ENCODE measurements at regions of chr6 and their contacts with region 1.

Region 1: DNA sequence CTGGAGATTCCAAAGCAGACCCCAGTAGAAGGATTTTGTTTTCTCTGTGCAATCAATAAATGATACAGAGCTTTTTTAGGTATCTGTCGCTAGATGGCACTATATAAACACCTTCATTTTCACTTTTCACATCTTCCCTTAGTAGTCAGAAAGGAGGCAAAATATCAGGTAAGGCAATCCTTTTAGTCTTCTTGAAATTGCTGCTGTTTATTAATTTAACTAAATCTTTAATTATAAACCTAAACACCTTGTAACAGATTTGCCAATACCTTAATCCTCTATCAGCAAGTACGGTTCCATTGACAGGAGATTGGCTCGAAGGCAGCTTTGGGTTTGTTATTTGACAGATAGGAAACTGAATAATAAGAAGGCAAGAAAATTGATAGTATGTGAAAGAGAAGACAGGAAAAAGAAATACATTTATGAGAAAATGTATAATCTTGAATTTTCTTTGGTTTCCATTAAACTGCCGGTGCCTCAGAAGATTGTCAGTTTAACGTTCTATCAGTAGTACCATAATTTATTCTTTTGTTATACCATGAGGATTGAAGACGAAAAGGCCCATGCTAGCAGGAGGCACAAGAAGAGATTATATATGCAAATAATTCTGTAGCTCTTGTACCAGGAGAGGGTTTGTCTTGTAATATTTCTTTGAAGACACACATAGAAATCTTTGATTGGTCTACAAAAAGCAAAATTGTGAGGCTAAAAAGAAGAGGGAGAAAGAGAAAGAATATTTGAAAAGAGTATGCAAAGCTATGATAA is 23.5 kb upstream of the IBTK start:
- DNase-seq: peak in 5 of 9 donors; percentile 14 to 38 (median 27)
- ATAC-seq: peak; percentile 72
- H3K4me3 ChIP-seq: no peak overlapping the region
- H3K4me3 Mint-ChIP-seq: no peak overlapping the region
- H3K27ac ChIP-seq: no peak overlapping the region
- H3K27ac Mint-ChIP-seq: no peak overlapping the region
- H3K4me1 ChIP-seq: no peaks in the 10 kb centered on the region
- H3K4me1 Mint-ChIP-seq: no peaks in the 10 kb centered on the region
- H3K27me3 ChIP-seq: no peaks in the 10 kb centered on the region
- H3K27me3 Mint-ChIP-seq: peaks cover 0 to 10% (median 0%) of the 10 kb centered on the region in 5 donors

Region 2: DNA sequence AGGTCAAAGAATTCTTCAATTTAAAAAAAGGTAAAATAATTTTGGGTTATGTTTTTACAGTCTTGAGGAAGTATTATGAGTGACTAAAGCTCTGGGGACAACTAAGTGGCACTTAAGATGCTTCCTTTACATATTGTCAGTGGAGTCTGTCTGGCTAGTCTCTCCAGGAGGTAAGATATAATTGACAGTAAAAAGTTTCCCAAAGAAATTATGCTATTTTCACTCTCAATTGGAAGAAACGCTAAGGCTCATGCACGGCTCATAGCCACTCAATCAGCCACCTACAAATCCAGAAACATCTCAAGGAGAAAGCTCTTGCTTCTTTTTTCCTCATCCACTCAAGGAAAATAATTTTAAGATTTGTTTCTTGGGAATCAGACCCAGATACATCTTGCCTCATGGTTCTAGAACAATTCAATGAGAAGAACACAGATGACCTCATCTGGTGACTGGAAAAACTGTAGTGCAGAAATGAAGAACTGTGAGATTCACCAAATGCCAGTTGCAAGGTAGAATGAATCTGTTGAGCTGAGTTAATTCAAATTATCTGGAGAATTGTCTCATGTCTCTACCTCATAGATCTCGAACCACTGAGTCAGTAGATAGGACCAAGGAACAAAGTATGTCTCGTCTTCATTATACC is 345.4 kb after region 1 on chr6:
- CTCF ChIA-PET with region 1: no interaction called
- POLR2A ChIA-PET with region 1: no interaction called
- intact Hi-C with region 1: loop called in 1 of 2 experiments (anchors 5 kb)
- DNase-seq: no peak
- ATAC-seq: no peak
- H3K4me3 ChIP-seq: no peak overlapping the region
- H3K4me3 Mint-ChIP-seq: no peak overlapping the region
- H3K27ac ChIP-seq: no peak overlapping the region
- H3K27ac Mint-ChIP-seq: no peak overlapping the region
- H3K4me1 ChIP-seq: no peaks in the 10 kb centered on the region
- H3K4me1 Mint-ChIP-seq: no peaks in the 10 kb centered on the region
- H3K27me3 ChIP-seq: no peaks in the 10 kb centered on the region
- H3K27me3 Mint-ChIP-seq: peaks cover 0 to 4% (median 0%) of the 10 kb centered on the region in 5 donors

Region 3: DNA sequence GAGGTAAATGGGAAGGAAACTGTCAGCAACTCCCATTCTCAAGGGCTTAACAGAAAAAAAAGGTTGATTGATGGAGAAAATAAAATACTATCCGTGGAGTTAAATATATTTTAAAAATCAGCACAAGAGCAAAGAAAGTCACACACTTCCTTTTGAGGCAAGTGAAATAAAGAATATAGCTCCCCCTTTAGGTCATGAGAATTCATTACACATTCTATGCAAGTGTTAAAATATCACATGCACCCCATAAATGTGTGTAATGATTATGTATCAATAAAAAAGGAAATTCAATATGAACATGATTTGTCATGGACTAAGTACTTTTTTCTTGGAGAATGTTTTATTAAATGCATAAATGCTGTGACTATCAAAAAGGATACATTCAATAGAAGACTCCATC is 441.8 kb after region 1 on chr6:
- CTCF ChIA-PET with region 1: no interaction called
- POLR2A ChIA-PET with region 1: no interaction called
- intact Hi-C with region 1: loop called in 1 of 2 experiments (anchors 1 kb)
- DNase-seq: no peak
- ATAC-seq: no peak
- H3K4me3 ChIP-seq: no peak overlapping the region
- H3K4me3 Mint-ChIP-seq: no peak overlapping the region
- H3K27ac ChIP-seq: no peak overlapping the region
- H3K27ac Mint-ChIP-seq: no peak overlapping the region
- H3K4me1 ChIP-seq: no peaks in the 10 kb centered on the region
- H3K4me1 Mint-ChIP-seq: no peaks in the 10 kb centered on the region
- H3K27me3 ChIP-seq: no peaks in the 10 kb centered on the region
- H3K27me3 Mint-ChIP-seq: peaks cover 0 to 38% (median 16%) of the 10 kb centered on the region in 5 donors

Region 4: DNA sequence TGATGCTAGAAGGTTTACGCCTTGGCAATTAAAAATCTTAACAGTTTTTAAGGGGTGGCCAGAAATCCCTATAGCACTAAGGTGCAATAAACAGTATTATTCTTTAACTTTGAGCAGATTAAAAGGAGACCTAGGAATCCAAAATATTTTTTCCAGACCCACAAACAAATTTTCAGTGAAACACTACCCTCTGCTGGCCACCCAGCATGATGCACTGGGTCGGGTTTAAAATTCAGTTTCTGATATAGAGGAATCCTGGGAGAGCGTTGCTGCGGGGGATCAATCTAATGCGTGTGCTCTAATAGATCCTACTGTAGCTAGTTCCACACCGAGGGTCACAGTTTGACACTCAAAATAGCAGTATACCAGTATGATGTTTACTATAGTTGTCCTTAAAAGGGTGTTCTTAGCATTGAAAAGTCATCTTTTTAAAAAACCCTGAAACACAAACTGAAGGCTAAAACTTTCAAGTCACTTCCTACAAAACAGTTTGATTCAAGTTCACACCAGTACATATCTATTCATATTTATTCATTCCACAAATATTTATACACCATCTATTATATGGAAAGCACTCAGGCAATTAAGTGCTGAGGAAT is 784.4 kb after region 1 on chr6:
- CTCF ChIA-PET with region 1: interaction called, 11 read pairs
- POLR2A ChIA-PET with region 1: no interaction called
- intact Hi-C with region 1: loop called (anchors 1 kb)
- DNase-seq: peak in 5 of 9 donors; percentile 18 to 44 (median 39)
- ATAC-seq: peak; percentile 78
- H3K4me3 ChIP-seq: no peak overlapping the region
- H3K4me3 Mint-ChIP-seq: no peak overlapping the region
- H3K27ac ChIP-seq: no peak overlapping the region
- H3K27ac Mint-ChIP-seq: no peak overlapping the region
- H3K4me1 ChIP-seq: no peaks in the 10 kb centered on the region
- H3K4me1 Mint-ChIP-seq: peaks cover 0 to 9% (median 5%) of the 10 kb centered on the region in 7 donors
- H3K27me3 ChIP-seq: no peaks in the 10 kb centered on the region
- H3K27me3 Mint-ChIP-seq: no peaks in the 10 kb centered on the region

Region 5: DNA sequence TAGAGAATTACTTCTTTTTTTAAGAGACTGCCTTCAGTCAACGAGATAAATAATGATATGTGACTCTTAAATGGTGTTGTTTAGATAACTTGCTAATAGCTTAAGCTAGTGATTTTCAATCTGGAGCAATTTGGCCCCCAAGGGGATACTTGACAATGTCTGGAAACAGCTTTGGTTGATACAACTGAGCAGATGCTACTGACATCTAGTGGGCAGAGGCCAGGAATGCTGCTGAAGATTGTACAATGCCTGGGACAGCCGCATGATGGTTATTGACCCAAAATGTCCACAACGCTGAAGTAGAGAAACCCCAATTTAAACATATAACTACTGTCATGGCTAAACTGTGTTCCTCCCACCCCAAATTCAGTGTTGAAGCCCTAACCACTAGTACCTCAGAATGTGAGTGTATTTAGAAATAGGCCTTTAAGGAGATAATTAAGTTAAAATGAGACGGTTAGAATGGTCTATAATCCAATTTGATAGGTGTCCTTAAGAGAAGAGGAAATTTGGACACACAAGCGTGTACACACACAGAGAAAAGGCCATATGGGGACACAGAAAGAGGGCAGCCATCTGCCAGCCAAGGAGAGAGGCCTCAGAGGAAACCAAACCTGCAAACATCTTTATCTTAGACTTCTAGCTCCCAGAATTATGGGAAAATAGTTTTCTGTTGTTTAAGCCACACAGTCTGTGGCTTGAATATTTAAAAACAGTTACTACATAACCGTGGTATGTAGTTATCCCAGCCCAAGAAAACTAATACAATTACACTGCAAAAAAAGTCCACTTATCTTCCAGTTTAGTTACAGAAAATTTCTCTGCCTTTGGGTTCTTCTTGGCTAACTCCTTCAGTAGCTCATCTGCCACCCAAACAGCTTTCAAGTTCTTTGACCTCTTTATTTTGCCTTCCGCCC is 944.3 kb after region 1 on chr6:
- CTCF ChIA-PET with region 1: no interaction called
- POLR2A ChIA-PET with region 1: no interaction called
- intact Hi-C with region 1: loop called (anchors 1 to 5 kb)
- DNase-seq: peak; percentile 8 to 56 (median 38)
- ATAC-seq: peak; percentile 98
- H3K4me3 ChIP-seq: no peak overlapping the region
- H3K4me3 Mint-ChIP-seq: no peak overlapping the region
- H3K27ac ChIP-seq: no peak overlapping the region
- H3K27ac Mint-ChIP-seq: no peak overlapping the region
- H3K4me1 ChIP-seq: no peaks in the 10 kb centered on the region
- H3K4me1 Mint-ChIP-seq: no peaks in the 10 kb centered on the region
- H3K27me3 ChIP-seq: no peaks in the 10 kb centered on the region
- H3K27me3 Mint-ChIP-seq: peaks cover 8 to 29% (median 12%) of the 10 kb centered on the region in 5 donors

Region 6: GRCh38 chr6:83514866-83515466 is 1243.9 kb after region 1 on chr6:
- CTCF ChIA-PET with region 1: interaction called, 4 read pairs
- POLR2A ChIA-PET with region 1: no interaction called
- intact Hi-C with region 1: loop called (anchors 1 to 2 kb)
- DNase-seq: peak in 5 of 9 donors; percentile 6 to 22 (median 18)
- ATAC-seq: peak; percentile 54
- H3K4me3 ChIP-seq: no peak overlapping the region
- H3K4me3 Mint-ChIP-seq: no peak overlapping the region
- H3K27ac ChIP-seq: no peak overlapping the region
- H3K27ac Mint-ChIP-seq: no peak overlapping the region
- H3K4me1 ChIP-seq: peaks cover 0 to 6% of the 10 kb centered on the region in 2 donors
- H3K4me1 Mint-ChIP-seq: peaks cover 0 to 17% (median 8%) of the 10 kb centered on the region in 7 donors
- H3K27me3 ChIP-seq: peaks cover 0 to 10% of the 10 kb centered on the region in 2 donors
- H3K27me3 Mint-ChIP-seq: peaks cover 36 to 59% (median 50%) of the 10 kb centered on the region in 5 donors

Measured in naive thymus-derived CD4-positive, alpha-beta T cell (primary cell).